OCI-LY7 (cell line): ENCODE measurements at regions of chr12 and their contacts with region 1.

Region 1: GRCh38 chr12:53321074-53321814 is at the start of gene AAAS:
- DNase-seq: peak; percentile 97
- H3K4me3 ChIP-seq: peak within 1 kb of the TSS; percentile 79
- H3K27ac ChIP-seq: peak within 1 kb of the TSS; percentile 82
- H3K4me1 ChIP-seq: peaks cover 40% of the 10 kb centered on the region
- CTCF ChIP-seq: peak; percentile 98
- total RNA-seq, gene AAAS: 85.5 and 95.6 TPM in 2 replicates

Region 2: DNA sequence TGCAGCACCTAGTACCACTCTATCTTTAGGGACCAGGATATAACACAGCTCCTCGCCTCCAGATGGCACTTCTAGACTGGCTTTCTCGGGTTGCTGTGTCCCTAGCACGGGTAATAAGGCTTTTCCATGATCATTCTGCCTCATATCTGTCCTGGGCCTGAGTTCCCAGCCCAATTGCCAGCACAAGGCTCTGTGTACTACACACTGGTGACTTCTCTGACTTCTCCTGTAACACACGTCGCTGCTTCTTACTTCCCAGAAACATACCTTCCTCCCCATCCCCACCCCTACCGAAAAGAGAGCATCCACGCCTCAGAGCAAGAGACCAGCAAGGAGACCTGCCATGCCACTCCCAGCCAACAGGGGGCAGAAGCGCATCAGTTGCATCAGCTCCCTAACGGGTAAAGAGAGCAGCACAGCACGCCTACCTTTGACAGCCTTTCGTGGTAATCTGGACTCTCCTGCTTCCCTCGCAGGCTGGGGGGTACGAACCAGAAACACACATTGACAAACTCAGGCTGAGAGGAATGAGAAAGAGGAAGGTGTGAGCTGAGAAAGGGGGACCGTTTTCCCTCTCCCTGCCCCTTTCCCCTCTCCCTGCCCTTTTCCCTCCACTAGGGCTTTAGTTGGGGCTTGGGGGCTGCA is 161.9 kb before region 1 on chr12:
- CTCF ChIA-PET with region 1: interaction called, 14 read pairs
- POLR2A ChIA-PET with region 1: interaction called, 4 read pairs
- intact Hi-C with region 1: loop called (anchors 1 kb)
- DNase-seq: peak; percentile 92
- H3K4me3 ChIP-seq: peak overlapping the region; percentile 41
- H3K27ac ChIP-seq: no peak overlapping the region
- H3K4me1 ChIP-seq: peaks cover 11% of the 10 kb centered on the region
- CTCF ChIP-seq: peak; percentile 99

Region 3: DNA sequence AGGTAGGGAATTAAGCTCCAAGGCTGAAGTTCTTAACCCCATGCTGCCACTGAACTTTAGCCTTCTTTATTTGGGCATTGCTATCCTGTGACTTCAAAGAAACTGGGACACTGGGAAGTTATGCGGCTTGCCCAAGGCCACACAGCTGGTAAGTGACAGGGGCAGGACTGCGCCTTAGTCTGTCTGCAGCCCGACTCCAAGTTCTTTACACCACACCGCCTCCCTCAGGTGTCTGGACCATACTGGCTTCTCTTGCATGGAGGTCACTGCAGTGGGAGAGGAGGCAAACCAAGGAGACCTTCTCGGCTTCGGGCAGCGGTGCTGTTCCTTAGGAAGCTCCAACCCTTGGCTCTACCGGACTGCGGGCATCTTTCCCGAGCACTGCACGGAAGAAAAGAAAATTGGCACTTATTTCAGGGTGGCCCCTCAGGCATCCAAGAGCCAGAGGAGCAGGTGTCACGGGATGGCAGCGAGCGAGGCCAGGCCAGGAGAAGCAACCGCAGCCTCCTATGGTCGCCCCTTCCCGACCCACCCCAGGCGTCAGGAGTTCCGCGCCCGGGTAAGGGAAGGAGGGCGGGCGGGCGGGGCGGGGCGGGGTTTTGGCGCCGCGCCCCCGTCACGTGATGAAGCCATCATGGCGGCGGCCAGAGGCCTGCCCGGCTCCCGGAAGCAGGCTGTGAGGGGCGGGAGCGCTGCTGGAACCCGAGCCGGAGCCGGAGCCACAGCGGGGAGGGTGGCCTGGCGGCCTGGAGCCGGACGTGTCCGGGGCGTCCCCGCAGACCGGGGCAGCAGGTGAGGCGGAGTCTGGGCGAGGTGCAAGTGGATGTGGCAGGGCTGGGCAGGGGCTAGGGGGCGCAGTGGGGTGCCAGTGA is 69.5 kb before region 1 on chr12:
- CTCF ChIA-PET with region 1: no interaction called
- POLR2A ChIA-PET with region 1: interaction called, 4 read pairs
- intact Hi-C with region 1: loop called (anchors 2 kb)
- DNase-seq: peak; percentile 84
- H3K4me3 ChIP-seq: peak overlapping the region; percentile 91
- H3K27ac ChIP-seq: peak overlapping the region; percentile 48
- H3K4me1 ChIP-seq: peaks cover 32% of the 10 kb centered on the region
- CTCF ChIP-seq: peak; percentile 66

Region 4: DNA sequence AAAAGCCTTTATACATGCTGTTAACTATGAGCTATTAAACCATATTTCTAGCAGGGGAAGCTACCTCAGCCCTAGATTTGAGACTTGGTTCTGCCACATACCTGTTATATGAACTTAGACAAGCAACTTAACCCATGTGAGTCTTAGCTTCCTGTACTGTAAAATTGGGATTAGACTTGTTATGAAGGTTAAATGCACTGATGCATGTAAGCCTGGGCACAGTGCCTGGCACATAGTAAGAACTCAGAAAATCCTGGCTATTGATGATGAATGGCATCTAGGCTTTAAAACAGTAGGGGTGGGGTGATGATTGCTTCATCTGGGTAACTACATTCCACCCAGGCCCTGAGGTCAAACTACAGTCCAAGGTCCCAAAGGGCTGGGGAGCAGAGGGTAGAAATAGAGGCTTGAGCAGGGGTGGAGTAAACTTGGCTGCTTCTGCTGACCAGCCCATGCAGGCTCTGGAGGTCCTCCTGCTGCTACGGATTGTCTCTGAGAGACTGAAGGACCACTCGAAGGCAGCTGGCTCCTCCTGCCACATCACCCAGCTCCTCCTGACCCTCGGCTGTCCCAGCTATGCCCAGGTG is 41.9 kb before region 1 on chr12:
- CTCF ChIA-PET with region 1: no interaction called
- POLR2A ChIA-PET with region 1: no interaction called
- intact Hi-C with region 1: no loop called
- DNase-seq: no peak
- H3K4me3 ChIP-seq: no peak overlapping the region
- H3K27ac ChIP-seq: no peak overlapping the region
- H3K4me1 ChIP-seq: no peaks in the 10 kb centered on the region
- CTCF ChIP-seq: no peak

Region 5: DNA sequence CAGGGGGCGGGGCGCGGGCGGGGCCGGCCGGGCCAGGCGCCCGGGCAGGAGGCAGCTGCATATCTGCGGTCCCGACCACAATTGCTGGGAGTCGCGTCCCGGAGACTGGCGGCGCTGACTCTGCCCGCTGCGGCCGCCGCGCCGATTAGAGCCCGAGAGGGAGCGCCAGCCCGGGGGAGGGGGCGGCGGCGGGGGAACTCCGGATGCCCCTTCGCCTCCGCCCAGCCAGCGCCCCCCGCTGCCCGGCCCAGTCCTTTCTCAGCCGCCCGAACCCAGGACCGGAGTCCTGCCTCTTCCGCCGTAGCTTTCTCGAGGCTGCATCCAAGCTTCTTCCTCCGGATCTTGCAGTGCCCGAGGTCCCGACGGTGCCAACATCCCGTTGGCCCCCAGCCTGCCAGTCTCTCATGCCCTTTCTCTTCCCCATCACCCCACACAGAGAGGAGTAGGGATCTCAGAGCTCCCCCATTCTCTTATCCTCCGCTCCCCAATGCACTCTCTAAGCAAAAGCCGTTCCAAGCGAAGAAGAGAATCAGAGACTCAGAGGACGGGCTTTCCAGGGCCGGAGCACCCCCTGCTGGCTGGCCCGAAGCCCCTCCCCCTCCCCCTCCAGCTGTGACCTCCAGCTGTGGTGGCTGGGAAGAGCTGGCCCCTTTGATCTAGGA is 23.7 kb after region 1 on chr12:
- CTCF ChIA-PET with region 1: interaction called, 43 read pairs
- POLR2A ChIA-PET with region 1: interaction called, 30 read pairs
- intact Hi-C with region 1: loop called (anchors 1 kb)
- DNase-seq: peak; percentile 80
- H3K4me3 ChIP-seq: peak overlapping the region; percentile 65
- H3K27ac ChIP-seq: no peak overlapping the region
- H3K4me1 ChIP-seq: peaks cover 21% of the 10 kb centered on the region
- CTCF ChIP-seq: peak; percentile 91

Region 6: GRCh38 chr12:53365245-53365904 is 44.1 kb after region 1 on chr12:
- CTCF ChIA-PET with region 1: no interaction called
- POLR2A ChIA-PET with region 1: no interaction called
- intact Hi-C with region 1: no loop called
- DNase-seq: no peak
- H3K4me3 ChIP-seq: no peak overlapping the region
- H3K27ac ChIP-seq: no peak overlapping the region
- H3K4me1 ChIP-seq: peaks cover 9% of the 10 kb centered on the region
- CTCF ChIP-seq: no peak

Region 7: DNA sequence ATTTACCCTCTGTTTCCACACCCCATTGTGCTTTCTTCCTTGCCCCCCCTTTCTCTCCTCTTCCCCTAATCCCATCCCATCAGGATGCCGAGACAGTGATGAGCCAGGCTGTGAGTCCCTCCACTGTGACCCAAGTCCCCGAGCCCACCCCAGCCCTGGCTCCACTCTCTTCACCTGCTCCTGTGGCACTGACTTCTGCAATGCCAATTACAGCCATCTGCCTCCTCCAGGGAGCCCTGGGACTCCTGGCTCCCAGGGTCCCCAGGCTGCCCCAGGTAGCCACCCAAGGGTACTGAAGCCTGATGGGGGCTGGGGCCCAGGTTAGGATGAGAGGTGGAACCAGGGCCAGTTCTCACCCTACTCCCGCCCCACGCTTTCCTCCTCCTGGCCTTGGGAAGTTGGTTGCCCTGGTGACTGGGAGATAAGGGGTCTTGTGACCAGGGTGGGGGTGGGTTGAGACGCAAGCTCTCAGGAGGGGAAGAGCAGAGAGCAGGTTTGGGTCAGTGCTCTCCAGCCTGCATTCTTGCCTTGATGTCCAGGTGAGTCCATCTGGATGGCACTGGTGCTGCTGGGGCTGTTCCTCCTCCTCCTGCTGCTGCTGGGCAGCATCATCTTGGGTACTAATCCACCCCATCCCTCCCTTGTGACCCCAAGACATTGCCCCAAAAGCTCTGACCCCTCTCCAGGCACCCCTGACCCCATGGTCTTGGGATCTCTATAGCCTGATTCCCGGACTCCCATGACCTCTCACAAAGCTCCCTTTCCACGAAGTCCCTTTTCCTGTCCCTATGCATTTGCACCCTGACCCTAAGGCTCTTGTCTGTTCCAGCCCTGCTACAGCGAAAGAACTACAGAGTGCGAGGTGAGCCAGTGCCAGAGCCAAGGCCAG is 103.6 kb after region 1 on chr12:
- CTCF ChIA-PET with region 1: no interaction called
- POLR2A ChIA-PET with region 1: interaction called, 3 read pairs
- intact Hi-C with region 1: loop called (anchors 1 kb)
- DNase-seq: no peak
- H3K4me3 ChIP-seq: no peak overlapping the region
- H3K27ac ChIP-seq: no peak overlapping the region
- H3K4me1 ChIP-seq: peaks cover 4% of the 10 kb centered on the region
- CTCF ChIP-seq: no peak

Region 8: DNA sequence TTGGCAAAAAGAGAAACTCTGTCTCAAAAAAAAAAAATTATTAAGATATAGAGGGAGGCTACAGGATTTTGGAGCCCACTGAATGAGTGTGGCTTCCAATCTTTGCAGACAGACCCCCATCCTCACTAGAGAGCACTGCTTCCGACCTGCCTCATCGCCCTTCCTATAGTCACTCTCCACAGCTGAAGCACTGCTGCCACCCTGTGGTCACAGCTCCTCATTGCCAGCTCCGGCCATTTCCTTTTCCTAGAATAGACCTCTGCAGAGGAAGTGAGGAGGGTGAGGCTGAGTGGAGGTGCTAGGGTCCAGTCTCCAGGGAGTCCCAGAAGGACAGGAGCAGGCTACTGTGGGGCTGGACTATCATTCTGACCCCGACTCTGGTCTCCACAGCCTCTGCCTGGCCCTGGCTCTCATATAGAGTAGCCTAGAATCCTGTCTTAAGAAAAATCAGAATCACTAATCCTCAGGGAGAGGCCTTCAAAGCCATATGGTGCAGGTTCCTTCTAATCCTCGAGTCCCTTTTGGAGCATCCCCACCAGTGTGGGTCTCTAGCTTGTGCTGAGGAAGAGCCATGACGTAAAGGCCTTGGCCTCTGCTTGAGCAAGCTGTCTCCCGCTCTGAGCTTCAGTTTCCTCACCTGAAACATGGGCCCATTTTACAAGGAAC is 187.4 kb after region 1 on chr12:
- CTCF ChIA-PET with region 1: interaction called, 5 read pairs
- POLR2A ChIA-PET with region 1: no interaction called
- intact Hi-C with region 1: loop called (anchors 1 kb)
- DNase-seq: peak; percentile 88
- H3K4me3 ChIP-seq: no peak overlapping the region
- H3K27ac ChIP-seq: no peak overlapping the region
- H3K4me1 ChIP-seq: peaks cover 7% of the 10 kb centered on the region
- CTCF ChIP-seq: peak; percentile 92

Region 9: GRCh38 chr12:53551889-53552291 is 230.6 kb after region 1 on chr12:
- CTCF ChIA-PET with region 1: no interaction called
- POLR2A ChIA-PET with region 1: no interaction called
- intact Hi-C with region 1: no loop called
- DNase-seq: no peak
- H3K4me3 ChIP-seq: no peak overlapping the region
- H3K27ac ChIP-seq: no peak overlapping the region
- H3K4me1 ChIP-seq: no peaks in the 10 kb centered on the region
- CTCF ChIP-seq: 0 out of 2 replicates have a peak, but pooled peaks have one; percentile 13